Heart left ventricle (tissue), 16 donors: ENCODE measurements at regions of chr9 and their contacts with region 1.

Region 1: GRCh38 chr9:85741875-85742629 is at the start of gene AGTPBP1:
- DNase-seq: peak; percentile 96 to 99 (median 97)
- ATAC-seq: peak; percentile 94 to 99 (median 98)
- H3K4me3 ChIP-seq: peak within 1 kb of the TSS; percentile 81 to 100 (median 98)
- H3K27ac ChIP-seq: peak within 1 kb of the TSS; percentile 69 to 95 (median 88)
- H3K4me1 ChIP-seq: peaks cover 0 to 57% (median 15%) of the 10 kb centered on the region in 12 donors
- H3K27me3 ChIP-seq: no peaks in the 10 kb centered on the region
- CTCF ChIP-seq: peak in 1 of 12 donors; percentile 12
- POLR2A ChIP-seq: peak; percentile 22 to 77
- total RNA-seq, gene AGTPBP1: 39.5 to 72.4 (median 48.1) TPM

Region 2: GRCh38 chr9:85610074-85610860 is 131.8 kb before region 1 on chr9:
- intact Hi-C with region 1: no loop called
- DNase-seq: no peak
- ATAC-seq: peak in 3 of 4 donors; percentile 64 to 78 (median 73)
- H3K4me3 ChIP-seq: peak overlapping the region in 7 of 12 donors; percentile 5 to 46 (median 31)
- H3K27ac ChIP-seq: peak overlapping the region in 1 of 12 donors; percentile 18
- H3K4me1 ChIP-seq: peaks cover 0 to 7% (median 0%) of the 10 kb centered on the region in 12 donors
- H3K27me3 ChIP-seq: no peaks in the 10 kb centered on the region
- CTCF ChIP-seq: peak; percentile 69 to 90 (median 76)
- POLR2A ChIP-seq: no peak

Region 3: DNA sequence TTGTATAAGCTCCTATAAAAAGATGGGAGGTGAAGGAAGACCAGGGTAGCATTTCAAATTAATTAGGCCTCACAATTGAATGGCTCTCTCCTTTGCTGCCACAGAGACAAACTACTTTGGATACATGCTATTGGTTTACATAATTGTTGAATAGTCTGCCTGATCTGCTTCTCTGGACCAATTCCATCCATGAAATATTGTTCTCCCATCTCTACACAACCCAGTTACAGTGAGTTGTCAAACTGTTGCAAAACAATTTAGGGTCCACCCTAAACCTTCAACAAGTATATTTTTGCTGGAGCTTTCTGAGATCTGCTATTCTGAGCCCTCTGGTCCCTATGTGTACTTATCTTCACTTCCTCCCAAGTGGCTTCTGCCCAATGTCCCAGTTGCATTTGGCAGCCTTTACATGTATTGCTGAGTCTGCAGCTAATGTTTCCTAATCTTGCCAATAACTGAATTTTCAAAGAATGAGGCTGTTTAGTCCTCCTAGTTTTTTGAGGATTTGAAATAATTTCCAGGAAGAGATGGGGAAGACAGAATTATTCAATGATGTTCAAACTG is 39.2 kb before region 1 on chr9:
- intact Hi-C with region 1: loop called in 5 of 10 experiments (anchors 5 to 10 kb)
- DNase-seq: no peak
- ATAC-seq: peak in 3 of 4 donors; percentile 39 to 76 (median 42)
- H3K4me3 ChIP-seq: no peak overlapping the region
- H3K27ac ChIP-seq: peak overlapping the region in 1 of 12 donors; percentile 3
- H3K4me1 ChIP-seq: peaks cover 0 to 29% (median 10%) of the 10 kb centered on the region in 12 donors
- H3K27me3 ChIP-seq: no peaks in the 10 kb centered on the region
- CTCF ChIP-seq: no peak
- POLR2A ChIP-seq: no peak

Region 4: GRCh38 chr9:85723215-85723614 is 18.8 kb before region 1 on chr9:
- intact Hi-C with region 1: loop called in 1 of 10 experiments (anchors 1 kb)
- DNase-seq: peak in 3 of 5 donors; percentile 25 to 31 (median 29)
- ATAC-seq: no peak
- H3K4me3 ChIP-seq: no peak overlapping the region
- H3K27ac ChIP-seq: no peak overlapping the region
- H3K4me1 ChIP-seq: peaks cover 0 to 21% (median 0%) of the 10 kb centered on the region in 12 donors
- H3K27me3 ChIP-seq: no peaks in the 10 kb centered on the region
- CTCF ChIP-seq: no peak
- POLR2A ChIP-seq: no peak